IMR-90 (cell line): ENCODE measurements at regions of chr19 and their contacts with region 1.

Region 1: GRCh38 chr19:54297760-54298305 is 15.1 kb downstream of the LILRA5 start:
- DNase-seq: no peak
- ATAC-seq: no peak
- H3K4me3 ChIP-seq: no peak overlapping the region
- H3K27ac ChIP-seq: no peak overlapping the region
- H3K4me1 ChIP-seq: no peaks in the 10 kb centered on the region
- H3K27me3 ChIP-seq: no peaks in the 10 kb centered on the region
- CTCF ChIP-seq: no peak
- POLR2A ChIP-seq: no peak
- RAD21 ChIP-seq: no peak

Region 2: GRCh38 chr19:54316746-54317107 is 18.9 kb after region 1 on chr19:
- CTCF ChIA-PET with region 1: no interaction called
- POLR2A ChIA-PET with region 1: no interaction called
- dilution Hi-C with region 1: no loop called
- in situ Hi-C with region 1: no loop called
- intact Hi-C with region 1: no loop called
- DNase-seq: no peak
- ATAC-seq: no peak
- H3K4me3 ChIP-seq: no peak overlapping the region
- H3K27ac ChIP-seq: no peak overlapping the region
- H3K4me1 ChIP-seq: no peaks in the 10 kb centered on the region
- H3K27me3 ChIP-seq: no peaks in the 10 kb centered on the region
- CTCF ChIP-seq: no peak
- POLR2A ChIP-seq: no peak
- RAD21 ChIP-seq: no peak

Region 3: DNA sequence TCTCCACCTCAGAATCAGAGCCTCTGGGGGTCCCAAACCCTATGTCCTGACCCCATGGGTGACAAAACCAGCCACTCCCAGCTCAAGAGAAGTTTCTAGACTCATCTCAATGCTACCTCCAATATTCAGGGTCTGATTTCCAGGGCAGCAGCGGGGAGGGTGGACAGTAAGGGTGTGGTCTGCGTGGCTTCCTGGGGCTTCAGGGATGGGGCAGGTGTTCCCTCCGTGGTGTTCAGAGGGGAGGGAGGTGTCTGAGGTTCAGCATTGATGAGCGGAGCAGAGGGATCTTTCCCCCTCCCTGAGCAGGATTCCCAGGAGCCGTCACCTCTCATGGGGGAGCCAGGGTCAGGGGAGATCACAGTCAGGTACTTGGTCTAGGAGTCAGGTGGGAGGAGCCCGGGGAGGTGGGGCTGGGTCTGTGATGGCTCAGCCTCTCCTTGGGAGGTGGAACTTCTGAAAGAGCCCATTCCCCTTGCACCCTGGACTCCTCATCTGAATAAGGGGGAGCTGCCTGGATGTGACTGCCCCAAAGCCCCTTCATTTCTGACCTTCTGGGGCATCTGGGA is 278.7 kb after region 1 on chr19:
- CTCF ChIA-PET with region 1: no interaction called
- POLR2A ChIA-PET with region 1: no interaction called
- dilution Hi-C with region 1: no loop called
- in situ Hi-C with region 1: loop called (anchors 5 kb)
- intact Hi-C with region 1: no loop called
- DNase-seq: no peak
- ATAC-seq: no peak
- H3K4me3 ChIP-seq: no peak overlapping the region
- H3K27ac ChIP-seq: no peak overlapping the region
- H3K4me1 ChIP-seq: no peaks in the 10 kb centered on the region
- H3K27me3 ChIP-seq: no peaks in the 10 kb centered on the region
- CTCF ChIP-seq: no peak
- POLR2A ChIP-seq: no peak
- RAD21 ChIP-seq: no peak